Activated CD4-positive, alpha-beta T cell treated with anti-CD3 and anti-CD28 coated beads for 36 hours (primary cell): ENCODE measurements at regions of chr3 and their contacts with region 1.

Region 1: GRCh38 chr3:10417849-10418248 is 87.5 kb downstream of the ATP2B2 start:
- DNase-seq: peak; percentile 25
- ATAC-seq: peak; percentile 27
- H3K4me3 Mint-ChIP-seq: no peak overlapping the region
- H3K27ac Mint-ChIP-seq: no peak overlapping the region
- H3K4me1 Mint-ChIP-seq: peaks cover 9% of the 10 kb centered on the region
- H3K27me3 Mint-ChIP-seq: no peaks in the 10 kb centered on the region

Region 2: DNA sequence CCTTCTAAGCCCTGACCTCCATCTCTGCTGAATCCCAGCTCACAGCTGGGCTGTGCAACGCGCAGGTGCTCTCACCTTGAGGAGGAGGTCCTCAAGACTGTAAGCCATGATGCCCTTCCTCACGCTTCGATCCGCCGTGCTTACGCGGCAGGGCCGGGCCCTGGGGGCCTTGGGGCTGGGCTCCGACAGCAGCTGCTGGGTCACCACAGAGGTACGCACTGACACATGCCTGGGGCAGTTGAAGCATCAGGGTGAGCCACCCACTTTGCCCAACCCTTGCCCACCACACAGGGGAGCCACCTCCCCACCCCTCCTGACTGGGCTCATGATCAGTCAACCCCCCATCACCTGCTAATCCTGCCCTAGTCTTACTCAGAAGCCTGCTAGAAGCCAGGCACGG is 540.9 kb before region 1 on chr3:
- CTCF ChIA-PET with region 1: no interaction called
- POLR2A ChIA-PET with region 1: no interaction called
- intact Hi-C with region 1: no loop called
- DNase-seq: peak; percentile 24
- ATAC-seq: no peak
- H3K4me3 Mint-ChIP-seq: no peak overlapping the region
- H3K27ac Mint-ChIP-seq: no peak overlapping the region
- H3K4me1 Mint-ChIP-seq: no peaks in the 10 kb centered on the region
- H3K27me3 Mint-ChIP-seq: no peaks in the 10 kb centered on the region

Region 3: DNA sequence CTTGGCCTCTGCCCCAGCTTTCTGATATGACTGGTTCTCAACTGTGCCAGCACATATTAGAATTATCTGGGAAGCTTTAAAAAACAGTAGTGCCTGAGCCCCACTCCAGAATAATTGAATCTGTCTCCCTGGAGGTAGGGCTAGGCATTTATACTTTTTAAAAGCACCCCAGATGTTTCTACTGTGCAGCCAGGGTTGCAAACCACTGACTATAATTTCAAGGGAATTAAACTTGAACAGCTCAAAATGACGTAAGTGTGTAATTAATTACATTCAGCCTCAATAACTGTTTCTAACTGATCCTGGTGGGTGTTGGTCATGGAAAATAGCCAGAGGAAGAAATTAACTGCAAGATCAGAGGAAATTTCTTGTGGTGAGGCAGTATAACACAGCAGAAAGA is 257.5 kb before region 1 on chr3:
- CTCF ChIA-PET with region 1: no interaction called
- POLR2A ChIA-PET with region 1: no interaction called
- intact Hi-C with region 1: no loop called
- DNase-seq: no peak
- ATAC-seq: no peak
- H3K4me3 Mint-ChIP-seq: no peak overlapping the region
- H3K27ac Mint-ChIP-seq: no peak overlapping the region
- H3K4me1 Mint-ChIP-seq: peaks cover 1% of the 10 kb centered on the region
- H3K27me3 Mint-ChIP-seq: no peaks in the 10 kb centered on the region

Region 4: GRCh38 chr3:10693460-10693859 is 275.6 kb after region 1 on chr3:
- CTCF ChIA-PET with region 1: no interaction called
- POLR2A ChIA-PET with region 1: no interaction called
- intact Hi-C with region 1: loop called in 1 of 2 experiments (anchors 5 kb)
- DNase-seq: no peak
- ATAC-seq: no peak
- H3K4me3 Mint-ChIP-seq: no peak overlapping the region
- H3K27ac Mint-ChIP-seq: no peak overlapping the region
- H3K4me1 Mint-ChIP-seq: no peaks in the 10 kb centered on the region
- H3K27me3 Mint-ChIP-seq: peaks cover 14% of the 10 kb centered on the region

Region 5: DNA sequence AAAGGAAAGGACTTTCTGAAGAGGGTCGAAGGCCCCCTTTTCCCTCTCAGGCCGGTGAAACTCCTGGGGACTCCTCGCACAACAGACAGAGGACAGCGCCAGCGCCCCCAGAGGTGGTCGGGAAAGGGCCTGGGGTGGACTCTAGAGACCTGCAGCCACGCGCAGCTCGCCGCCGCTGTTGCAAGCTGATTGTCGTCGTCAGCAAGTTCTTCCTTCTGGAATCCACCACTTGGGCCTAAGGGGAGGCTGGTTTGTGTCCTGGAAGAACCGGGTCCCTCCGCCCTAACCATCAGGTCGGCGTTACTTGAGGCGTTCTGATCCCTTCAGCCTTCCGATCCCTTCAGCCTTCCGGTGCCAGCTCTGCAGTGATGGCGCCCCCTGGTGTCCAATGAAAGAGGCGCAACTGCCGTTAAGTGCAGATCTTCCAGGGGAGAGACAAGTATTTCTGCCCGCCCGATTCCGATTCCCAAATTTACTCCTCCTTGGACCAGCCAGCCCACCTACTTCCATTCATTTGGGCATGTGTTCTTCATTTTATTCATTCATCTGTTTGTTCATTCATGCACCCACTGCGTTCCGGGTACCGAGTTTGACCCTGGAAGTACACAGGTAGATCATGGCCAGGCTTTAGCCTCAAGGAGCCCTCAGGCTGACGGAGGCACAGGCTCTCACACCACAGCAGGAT is 321.0 kb after region 1 on chr3:
- CTCF ChIA-PET with region 1: interaction called, 3 read pairs
- POLR2A ChIA-PET with region 1: no interaction called
- intact Hi-C with region 1: loop called (anchors 1 kb)
- DNase-seq: peak; percentile 85
- ATAC-seq: peak; percentile 79
- H3K4me3 Mint-ChIP-seq: no peak overlapping the region
- H3K27ac Mint-ChIP-seq: no peak overlapping the region
- H3K4me1 Mint-ChIP-seq: peaks cover 2% of the 10 kb centered on the region
- H3K27me3 Mint-ChIP-seq: peaks cover 41% of the 10 kb centered on the region